Activated CD4-positive, alpha-beta memory T cell treated with anti-CD3 and anti-CD28 coated beads for 36 hours (primary cell): ENCODE measurements at regions of chr3 and their contacts with region 1.

Region 1: GRCh38 chr3:101827211-101828174 is 21.8 kb upstream of the NFKBIZ start:
- DNase-seq: peak; percentile 95
- H3K4me3 Mint-ChIP-seq: peak overlapping the region; percentile 85
- H3K27ac Mint-ChIP-seq: peak overlapping the region; percentile 96
- H3K4me1 Mint-ChIP-seq: peaks cover 63% of the 10 kb centered on the region
- H3K27me3 Mint-ChIP-seq: no peaks in the 10 kb centered on the region

Region 2: GRCh38 chr3:101779047-101779821 is 48.3 kb before region 1 on chr3 and contains the start of gene NXPE3:
- CTCF ChIA-PET with region 1: no interaction called
- POLR2A ChIA-PET with region 1: interaction called, 6 read pairs
- intact Hi-C with region 1: loop called (anchors 1 kb)
- DNase-seq: peak; percentile 96
- H3K4me3 Mint-ChIP-seq: peak within 1 kb of the TSS; percentile 95
- H3K27ac Mint-ChIP-seq: peak within 1 kb of the TSS; percentile 95
- H3K4me1 Mint-ChIP-seq: peaks cover 51% of the 10 kb centered on the region
- H3K27me3 Mint-ChIP-seq: no peaks in the 10 kb centered on the region
- total RNA-seq, gene NXPE3: 18.7 to 19.8 TPM

Region 3: GRCh38 chr3:101861212-101861788 is 33.8 kb after region 1 on chr3:
- CTCF ChIA-PET with region 1: interaction called, 3 read pairs
- POLR2A ChIA-PET with region 1: interaction called, 88 read pairs
- intact Hi-C with region 1: loop called (anchors 5 kb)
- DNase-seq: no peak
- H3K4me3 Mint-ChIP-seq: no peak overlapping the region
- H3K27ac Mint-ChIP-seq: no peak overlapping the region
- H3K4me1 Mint-ChIP-seq: peaks cover 64% of the 10 kb centered on the region
- H3K27me3 Mint-ChIP-seq: no peaks in the 10 kb centered on the region

Region 4: GRCh38 chr3:101988591-101988990 is 161.1 kb after region 1 on chr3:
- CTCF ChIA-PET with region 1: no interaction called
- POLR2A ChIA-PET with region 1: no interaction called
- intact Hi-C with region 1: loop called (anchors 5 kb)
- DNase-seq: peak; percentile 40
- H3K4me3 Mint-ChIP-seq: no peak overlapping the region
- H3K27ac Mint-ChIP-seq: no peak overlapping the region
- H3K4me1 Mint-ChIP-seq: peaks cover 29% of the 10 kb centered on the region
- H3K27me3 Mint-ChIP-seq: peaks cover 11% of the 10 kb centered on the region